ENCODE measurements at regions of chr15 and their contacts with region 1.

Region 1: GRCh38 chr15:94324117-94324826 is 92.9 kb downstream of the MCTP2 start:
- DNase-seq: peak; percentile 75
- ATAC-seq: peak; percentile 78
- H3K4me3 Mint-ChIP-seq: no peak overlapping the region
- H3K27ac Mint-ChIP-seq: no peak overlapping the region
- H3K4me1 Mint-ChIP-seq: peaks cover 28% of the 10 kb centered on the region
- H3K27me3 Mint-ChIP-seq: no peaks in the 10 kb centered on the region

Region 2: GRCh38 chr15:94086341-94086740 is 237.9 kb before region 1 on chr15:
- CTCF ChIA-PET with region 1: no interaction called
- POLR2A ChIA-PET with region 1: no interaction called
- DNase-seq: no peak
- ATAC-seq: no peak
- H3K4me3 Mint-ChIP-seq: no peak overlapping the region
- H3K27ac Mint-ChIP-seq: no peak overlapping the region
- H3K4me1 Mint-ChIP-seq: no peaks in the 10 kb centered on the region
- H3K27me3 Mint-ChIP-seq: peaks cover 1% of the 10 kb centered on the region

Region 3: GRCh38 chr15:94154245-94154644 is 170.0 kb before region 1 on chr15:
- CTCF ChIA-PET with region 1: interaction called, 12 read pairs
- POLR2A ChIA-PET with region 1: no interaction called
- DNase-seq: no peak
- ATAC-seq: no peak
- H3K4me3 Mint-ChIP-seq: no peak overlapping the region
- H3K27ac Mint-ChIP-seq: no peak overlapping the region
- H3K4me1 Mint-ChIP-seq: no peaks in the 10 kb centered on the region
- H3K27me3 Mint-ChIP-seq: peaks cover 35% of the 10 kb centered on the region

Region 4: GRCh38 chr15:94174399-94174802 is 149.9 kb before region 1 on chr15:
- CTCF ChIA-PET with region 1: interaction called, 24 read pairs
- POLR2A ChIA-PET with region 1: no interaction called
- DNase-seq: no peak
- ATAC-seq: peak; percentile 78
- H3K4me3 Mint-ChIP-seq: no peak overlapping the region
- H3K27ac Mint-ChIP-seq: peak overlapping the region; percentile 3
- H3K4me1 Mint-ChIP-seq: peaks cover 22% of the 10 kb centered on the region
- H3K27me3 Mint-ChIP-seq: peaks cover 2% of the 10 kb centered on the region

Region 5: GRCh38 chr15:94230956-94231722 is 93.1 kb before region 1 on chr15 and contains the start of gene MCTP2:
- CTCF ChIA-PET with region 1: interaction called, 108 read pairs
- POLR2A ChIA-PET with region 1: interaction called, 11 read pairs
- DNase-seq: peak; percentile 92
- ATAC-seq: peak; percentile 90
- H3K4me3 Mint-ChIP-seq: peak within 1 kb of the TSS; percentile 92
- H3K27ac Mint-ChIP-seq: peak within 1 kb of the TSS; percentile 96
- H3K4me1 Mint-ChIP-seq: peaks cover 66% of the 10 kb centered on the region
- H3K27me3 Mint-ChIP-seq: peaks cover 3% of the 10 kb centered on the region
- total RNA-seq, gene MCTP2: 26.2 to 26.9 TPM

Region 6: DNA sequence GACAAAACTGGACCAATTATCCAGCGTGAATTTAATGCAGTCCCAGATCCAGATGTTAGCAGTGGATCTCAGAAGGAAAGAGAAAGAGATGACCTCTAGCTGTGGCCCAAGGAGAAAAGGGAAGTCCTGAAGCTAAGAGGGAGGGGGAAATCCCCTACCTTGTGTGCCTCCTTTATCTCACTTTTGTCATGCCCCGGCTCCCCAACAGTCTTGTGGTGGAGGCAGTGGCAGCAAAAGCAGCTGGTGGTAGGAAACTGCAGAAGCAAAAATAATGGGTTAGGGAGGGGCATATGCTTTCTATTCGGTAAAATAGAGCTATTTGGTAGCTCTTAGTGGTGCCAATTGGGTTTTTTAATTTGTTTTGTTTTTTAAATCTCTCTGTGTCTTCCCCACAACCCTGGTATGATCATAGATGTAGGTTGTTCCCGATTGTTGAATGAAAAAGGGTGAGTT is 36.5 kb before region 1 on chr15:
- CTCF ChIA-PET with region 1: interaction called, 56 read pairs
- POLR2A ChIA-PET with region 1: interaction called, 4 read pairs
- DNase-seq: peak; percentile 77
- ATAC-seq: peak; percentile 95
- H3K4me3 Mint-ChIP-seq: peak overlapping the region; percentile 66
- H3K27ac Mint-ChIP-seq: peak overlapping the region; percentile 72
- H3K4me1 Mint-ChIP-seq: peaks cover 52% of the 10 kb centered on the region
- H3K27me3 Mint-ChIP-seq: no peaks in the 10 kb centered on the region

Region 7: GRCh38 chr15:94335616-94336015 is 11.3 kb after region 1 on chr15:
- CTCF ChIA-PET with region 1: interaction called, 39 read pairs
- POLR2A ChIA-PET with region 1: no interaction called
- DNase-seq: no peak
- ATAC-seq: no peak
- H3K4me3 Mint-ChIP-seq: no peak overlapping the region
- H3K27ac Mint-ChIP-seq: no peak overlapping the region
- H3K4me1 Mint-ChIP-seq: no peaks in the 10 kb centered on the region
- H3K27me3 Mint-ChIP-seq: no peaks in the 10 kb centered on the region

Measured in activated CD8-positive, alpha-beta T cell treated with anti-CD3 and anti-CD28 coated beads, Interleukin-2, amount 10 ng/mL, durations not matched to agents 7 days and 5 days (primary cell).